ENCODE measurements at regions of chr10 and their contacts with region 1.

Region 1: GRCh38 chr10:107814865-107815487 is 650.5 kb upstream of the SORCS1 start:
- DNase-seq: no peak

Region 2: DNA sequence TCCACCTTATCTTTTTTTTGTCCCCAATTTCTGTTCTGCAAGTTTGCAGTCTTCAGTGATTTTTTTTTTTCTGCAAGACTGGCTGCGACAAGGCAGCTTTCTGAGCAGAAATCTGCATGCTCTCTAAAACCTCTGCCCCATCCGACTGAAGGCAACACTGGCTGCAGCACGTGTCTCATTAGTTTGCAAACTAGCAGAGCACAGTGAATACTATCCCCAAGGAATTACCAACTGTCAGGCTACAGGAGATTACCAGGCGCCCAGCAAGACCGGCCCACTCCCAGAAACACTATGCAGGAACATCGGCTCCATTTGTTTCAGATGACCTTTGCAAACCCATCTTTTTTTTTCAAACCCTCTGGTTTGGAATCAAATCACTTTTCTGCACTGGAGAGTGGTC is 1189.2 kb before region 1 on chr10:
- intact Hi-C with region 1: loop called (anchors 10 kb)
- DNase-seq: no peak

Region 3: GRCh38 chr10:106705681-106706100 is 1109.3 kb before region 1 on chr10:
- intact Hi-C with region 1: loop called (anchors 10 kb)
- DNase-seq: no peak

Region 4: GRCh38 chr10:107418407-107418806 is 396.6 kb before region 1 on chr10:
- intact Hi-C with region 1: loop called (anchors 10 kb)
- DNase-seq: no peak

Region 5: DNA sequence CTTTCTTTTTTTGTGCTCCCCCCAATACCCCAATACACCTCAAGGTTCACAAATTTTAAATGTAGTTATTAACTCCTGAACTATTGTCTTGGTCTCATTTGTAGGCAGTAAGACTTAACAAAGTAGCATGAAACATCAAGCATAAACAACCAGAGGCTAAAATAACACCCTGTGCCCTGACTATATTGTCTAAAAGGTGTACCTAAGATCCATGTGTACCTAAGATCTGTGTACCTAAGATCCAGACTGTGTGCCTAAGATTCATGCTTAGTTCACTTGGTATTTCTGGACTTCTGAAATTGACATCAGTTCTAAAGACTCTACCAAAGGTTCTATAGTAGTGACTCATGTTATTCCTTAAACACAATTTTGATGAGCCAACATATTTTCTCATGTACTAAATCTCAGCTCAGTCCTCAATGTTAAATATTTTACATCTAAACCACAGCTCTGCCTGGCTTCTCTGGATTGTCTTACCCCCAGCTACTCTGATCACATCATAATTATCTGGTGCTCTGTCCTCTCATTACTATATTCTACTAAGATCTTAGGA is 151.8 kb after region 1 on chr10:
- intact Hi-C with region 1: no loop called
- DNase-seq: no peak

Region 6: GRCh38 chr10:108039821-108040584 is 225.0 kb after region 1 on chr10:
- intact Hi-C with region 1: no loop called
- DNase-seq: no peak